HCT116 (cell line): ENCODE measurements at regions of chr4 and their contacts with region 1.

Region 1: DNA sequence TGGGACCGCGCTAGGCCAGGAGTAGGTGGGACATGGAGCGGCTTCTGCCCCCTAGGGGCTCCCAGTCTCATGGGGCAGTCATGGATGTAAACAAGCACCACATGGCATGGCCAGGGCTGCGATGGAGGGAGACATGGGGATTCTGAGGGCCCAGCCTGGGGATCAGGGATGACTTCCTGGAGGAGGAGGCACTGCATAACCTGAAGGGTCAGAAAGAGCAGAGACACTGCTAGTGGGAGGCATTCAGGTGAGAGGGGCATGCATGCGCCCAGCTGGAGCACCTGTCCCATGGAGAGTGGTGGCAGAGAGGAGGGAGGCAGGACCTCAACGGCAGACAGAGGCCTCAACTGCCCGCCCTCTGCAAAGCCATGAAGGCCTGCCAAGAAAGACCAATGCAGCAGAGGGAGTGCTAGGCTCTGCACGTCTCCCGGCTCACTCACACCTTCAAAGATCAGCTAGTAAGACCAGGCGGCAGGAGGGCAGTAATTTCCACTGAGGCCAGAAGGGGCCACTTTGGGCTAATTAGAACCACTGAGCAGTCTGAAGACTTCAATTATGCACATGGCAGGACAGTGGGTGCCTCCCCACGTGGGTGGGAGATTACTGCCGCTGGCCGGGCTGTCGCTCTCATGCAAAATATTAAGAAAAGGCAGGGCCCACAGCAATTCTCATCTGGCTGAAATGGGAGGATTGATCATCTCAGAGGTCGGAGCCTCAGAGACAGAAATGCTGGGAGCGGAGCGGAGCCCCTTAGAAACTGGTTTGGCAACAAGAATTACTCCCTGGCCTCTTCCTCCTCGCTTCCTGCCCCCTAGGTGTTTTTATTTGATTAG is 69.6 kb downstream of the PPP2R2C start:
- DNase-seq: no peak
- ATAC-seq: peak; percentile 70
- H3K4me3 ChIP-seq: no peak overlapping the region
- H3K27ac ChIP-seq: no peak overlapping the region
- H3K4me1 ChIP-seq: no peaks in the 10 kb centered on the region
- H3K27me3 ChIP-seq: no peaks in the 10 kb centered on the region; the same call in 1 of the 2 replicates
- CTCF ChIP-seq: no peak
- POLR2A ChIP-seq: no peak
- RAD21 ChIP-seq: no peak; the same call in 1 of the 2 replicates

Region 2: GRCh38 chr4:6420972-6421371 is 18.2 kb after region 1 on chr4:
- CTCF ChIA-PET with region 1: no interaction called
- POLR2A ChIA-PET with region 1: no interaction called
- RAD21 ChIA-PET with region 1: no interaction called
- intact Hi-C with region 1: loop called (anchors 1 kb)
- DNase-seq: no peak
- ATAC-seq: peak; percentile 61
- H3K4me3 ChIP-seq: no peak overlapping the region
- H3K27ac ChIP-seq: no peak overlapping the region
- H3K4me1 ChIP-seq: no peaks in the 10 kb centered on the region
- H3K27me3 ChIP-seq: no peaks in the 10 kb centered on the region
- CTCF ChIP-seq: no peak
- POLR2A ChIP-seq: no peak
- RAD21 ChIP-seq: no peak

Region 3: GRCh38 chr4:6546681-6547447 is 144.1 kb after region 1 on chr4:
- CTCF ChIA-PET with region 1: no interaction called
- POLR2A ChIA-PET with region 1: no interaction called
- RAD21 ChIA-PET with region 1: no interaction called
- intact Hi-C with region 1: loop called (anchors 10 kb)
- DNase-seq: peak; percentile 57
- ATAC-seq: peak; percentile 82
- H3K4me3 ChIP-seq: no peak overlapping the region
- H3K27ac ChIP-seq: no peak overlapping the region
- H3K4me1 ChIP-seq: peaks cover 0 to 3% of the 10 kb centered on the region in 2 experiments; a peak in 1 of 4 replicates
- H3K27me3 ChIP-seq: peaks cover 28% of the 10 kb centered on the region
- CTCF ChIP-seq: peak; percentile 87 to 97 (median 94)
- POLR2A ChIP-seq: no peak
- RAD21 ChIP-seq: peak; percentile 80